Naive thymus-derived CD4-positive, alpha-beta T cell (primary cell): ENCODE measurements at regions of chr12 and their contacts with region 1.

Region 1: GRCh38 chr12:3964439-3964838 is 91.2 kb upstream of the PARP11 start:
- DNase-seq: no peak
- ATAC-seq: no peak
- H3K4me3 ChIP-seq: no peak overlapping the region
- H3K4me3 Mint-ChIP-seq: no peak overlapping the region
- H3K27ac ChIP-seq: no peak overlapping the region
- H3K27ac Mint-ChIP-seq: peak overlapping the region in 4 of 9 donors; percentile 72 to 89 (median 84)
- H3K4me1 ChIP-seq: peaks cover 0 to 20% of the 10 kb centered on the region in 2 donors
- H3K4me1 Mint-ChIP-seq: peaks cover 13 to 47% (median 24%) of the 10 kb centered on the region in 7 donors
- H3K27me3 ChIP-seq: no peaks in the 10 kb centered on the region
- H3K27me3 Mint-ChIP-seq: no peaks in the 10 kb centered on the region

Region 2: GRCh38 chr12:3596703-3597415 is 367.6 kb before region 1 on chr12:
- CTCF ChIA-PET with region 1: no interaction called
- POLR2A ChIA-PET with region 1: no interaction called
- intact Hi-C with region 1: no loop called
- DNase-seq: no peak
- ATAC-seq: no peak
- H3K4me3 ChIP-seq: no peak overlapping the region
- H3K4me3 Mint-ChIP-seq: no peak overlapping the region
- H3K27ac ChIP-seq: no peak overlapping the region
- H3K27ac Mint-ChIP-seq: peak overlapping the region in 1 of 9 donors; percentile 33
- H3K4me1 ChIP-seq: no peaks in the 10 kb centered on the region
- H3K4me1 Mint-ChIP-seq: no peaks in the 10 kb centered on the region
- H3K27me3 ChIP-seq: no peaks in the 10 kb centered on the region
- H3K27me3 Mint-ChIP-seq: peaks cover 0 to 10% (median 3%) of the 10 kb centered on the region in 5 donors

Region 3: DNA sequence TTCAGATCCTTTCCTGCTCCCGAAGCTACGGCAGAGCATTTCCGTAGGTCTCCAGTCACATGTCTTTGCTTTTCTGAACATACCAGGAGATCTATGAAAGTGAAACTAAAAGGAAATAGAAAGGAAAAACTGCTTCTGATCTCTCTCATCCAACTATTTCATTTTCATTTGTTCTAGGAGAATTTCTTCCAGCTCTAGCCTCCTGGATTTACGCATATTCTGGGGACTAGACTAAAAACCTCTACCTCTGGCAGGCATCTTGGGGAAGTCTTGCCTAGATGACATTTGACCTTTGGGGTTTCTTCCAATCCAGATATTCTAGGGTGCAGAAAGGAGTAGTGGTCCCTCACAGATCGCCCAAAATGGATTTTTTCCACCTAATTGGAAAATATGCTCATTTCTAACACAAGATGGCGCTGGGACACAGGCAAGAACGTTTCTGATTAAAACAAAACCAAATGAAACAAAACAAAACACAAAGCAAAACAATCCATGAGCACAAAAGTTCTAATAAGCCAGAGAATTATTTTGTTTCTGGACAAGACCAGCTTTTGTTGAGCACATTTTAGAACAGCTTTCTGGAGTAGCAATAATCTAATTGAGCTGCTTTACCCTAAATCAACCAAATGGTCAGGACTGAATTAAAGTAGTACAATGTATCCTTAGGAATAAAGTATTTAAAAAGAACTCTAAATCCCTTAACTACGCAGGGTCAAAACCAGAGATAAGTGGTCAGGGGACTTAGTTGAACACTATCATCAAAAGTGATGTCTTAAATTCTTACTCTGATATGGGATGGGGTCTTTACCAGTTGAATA is 79.0 kb before region 1 on chr12:
- CTCF ChIA-PET with region 1: interaction called, 286 read pairs
- POLR2A ChIA-PET with region 1: interaction called, 79 read pairs
- intact Hi-C with region 1: loop called (anchors 1 kb)
- DNase-seq: peak in 7 of 9 donors; percentile 55 to 78 (median 69)
- ATAC-seq: peak; percentile 69
- H3K4me3 ChIP-seq: no peak overlapping the region
- H3K4me3 Mint-ChIP-seq: peak overlapping the region in 7 of 10 donors; percentile 1 to 61 (median 26)
- H3K27ac ChIP-seq: no peak overlapping the region
- H3K27ac Mint-ChIP-seq: peak overlapping the region in 8 of 9 donors; percentile 45 to 93 (median 66)
- H3K4me1 ChIP-seq: no peaks in the 10 kb centered on the region
- H3K4me1 Mint-ChIP-seq: peaks cover 6 to 26% (median 16%) of the 10 kb centered on the region in 7 donors
- H3K27me3 ChIP-seq: no peaks in the 10 kb centered on the region
- H3K27me3 Mint-ChIP-seq: peaks cover 0 to 10% (median 0%) of the 10 kb centered on the region in 5 donors

Region 4: DNA sequence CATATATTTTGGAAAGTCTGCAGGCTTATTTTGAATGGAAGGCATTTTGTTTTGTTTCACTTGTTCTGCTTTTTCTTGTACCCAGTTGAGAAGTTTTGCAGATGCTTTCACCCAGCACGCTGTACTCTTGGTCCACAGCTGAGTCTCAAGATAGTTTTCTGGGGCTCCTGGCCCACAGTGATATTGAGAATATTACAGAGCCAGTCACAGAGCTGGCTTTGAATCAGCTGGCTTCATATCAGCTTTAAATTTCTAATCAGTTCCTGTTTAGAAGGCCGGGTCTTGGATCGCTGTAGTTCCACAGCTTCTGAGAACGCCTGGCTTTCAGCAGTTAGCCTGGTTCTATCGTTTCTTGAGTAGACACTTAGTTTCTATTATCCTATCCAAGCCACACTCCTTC is 58.8 kb before region 1 on chr12:
- CTCF ChIA-PET with region 1: interaction called, 15 read pairs
- POLR2A ChIA-PET with region 1: interaction called, 21 read pairs
- intact Hi-C with region 1: loop called in 1 of 2 experiments (anchors 1 kb)
- DNase-seq: peak in 1 of 9 donors; percentile 18
- ATAC-seq: peak; percentile 44
- H3K4me3 ChIP-seq: peak overlapping the region; percentile 52
- H3K4me3 Mint-ChIP-seq: peak overlapping the region; percentile 82 to 98 (median 91)
- H3K27ac ChIP-seq: peak overlapping the region; percentile 71
- H3K27ac Mint-ChIP-seq: peak overlapping the region; percentile 81 to 99 (median 97)
- H3K4me1 ChIP-seq: peaks cover 0 to 18% of the 10 kb centered on the region in 2 donors
- H3K4me1 Mint-ChIP-seq: peaks cover 28 to 64% (median 52%) of the 10 kb centered on the region in 7 donors
- H3K27me3 ChIP-seq: no peaks in the 10 kb centered on the region
- H3K27me3 Mint-ChIP-seq: no peaks in the 10 kb centered on the region

Region 5: DNA sequence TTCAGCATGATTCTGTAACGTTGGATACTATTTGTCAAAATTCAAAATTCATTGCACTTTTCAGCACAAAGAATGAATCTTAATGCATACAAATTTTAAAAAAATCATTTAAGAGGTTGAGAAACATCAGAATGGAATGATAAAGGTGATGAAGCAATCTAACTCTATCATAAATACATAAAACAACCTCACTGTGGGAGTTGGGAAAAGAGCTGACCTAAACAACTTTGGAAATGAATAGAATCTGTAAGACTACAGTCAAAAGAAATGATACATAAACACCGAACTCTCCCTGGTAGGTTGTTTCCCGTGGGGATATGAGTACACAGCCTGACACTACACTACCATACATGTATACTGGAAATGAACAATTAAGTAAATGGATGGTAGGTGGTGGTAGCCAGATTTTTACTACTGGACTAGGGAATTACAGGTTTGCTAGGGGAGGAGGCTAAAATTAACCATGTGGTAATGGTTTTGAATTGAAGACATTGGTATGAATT is 26.3 kb before region 1 on chr12:
- CTCF ChIA-PET with region 1: interaction called, 26 read pairs
- POLR2A ChIA-PET with region 1: interaction called, 13 read pairs
- intact Hi-C with region 1: loop called in 1 of 2 experiments (anchors 1 kb)
- DNase-seq: no peak
- ATAC-seq: no peak
- H3K4me3 ChIP-seq: no peak overlapping the region
- H3K4me3 Mint-ChIP-seq: no peak overlapping the region
- H3K27ac ChIP-seq: no peak overlapping the region
- H3K27ac Mint-ChIP-seq: no peak overlapping the region
- H3K4me1 ChIP-seq: peaks cover 0 to 23% of the 10 kb centered on the region in 2 donors
- H3K4me1 Mint-ChIP-seq: peaks cover 21 to 60% (median 36%) of the 10 kb centered on the region in 7 donors
- H3K27me3 ChIP-seq: no peaks in the 10 kb centered on the region
- H3K27me3 Mint-ChIP-seq: peaks cover 0 to 5% (median 0%) of the 10 kb centered on the region in 5 donors

Region 6: GRCh38 chr12:3988519-3989448 is 24.3 kb after region 1 on chr12:
- CTCF ChIA-PET with region 1: interaction called, 46 read pairs
- POLR2A ChIA-PET with region 1: interaction called, 27 read pairs
- intact Hi-C with region 1: loop called in 1 of 2 experiments (anchors 2 kb)
- DNase-seq: peak in 7 of 9 donors; percentile 33 to 71 (median 62)
- ATAC-seq: peak; percentile 87
- H3K4me3 ChIP-seq: peak overlapping the region; percentile 20
- H3K4me3 Mint-ChIP-seq: peak overlapping the region; percentile 62 to 75 (median 70)
- H3K27ac ChIP-seq: peak overlapping the region; percentile 61
- H3K27ac Mint-ChIP-seq: peak overlapping the region; percentile 81 to 95 (median 91)
- H3K4me1 ChIP-seq: peaks cover 9 to 21% of the 10 kb centered on the region in 2 donors
- H3K4me1 Mint-ChIP-seq: peaks cover 12 to 52% (median 37%) of the 10 kb centered on the region in 7 donors
- H3K27me3 ChIP-seq: no peaks in the 10 kb centered on the region
- H3K27me3 Mint-ChIP-seq: peaks cover 0 to 15% (median 0%) of the 10 kb centered on the region in 5 donors